IMR-90 (cell line): ENCODE measurements at regions of chr3 and their contacts with region 1.

Region 1: DNA sequence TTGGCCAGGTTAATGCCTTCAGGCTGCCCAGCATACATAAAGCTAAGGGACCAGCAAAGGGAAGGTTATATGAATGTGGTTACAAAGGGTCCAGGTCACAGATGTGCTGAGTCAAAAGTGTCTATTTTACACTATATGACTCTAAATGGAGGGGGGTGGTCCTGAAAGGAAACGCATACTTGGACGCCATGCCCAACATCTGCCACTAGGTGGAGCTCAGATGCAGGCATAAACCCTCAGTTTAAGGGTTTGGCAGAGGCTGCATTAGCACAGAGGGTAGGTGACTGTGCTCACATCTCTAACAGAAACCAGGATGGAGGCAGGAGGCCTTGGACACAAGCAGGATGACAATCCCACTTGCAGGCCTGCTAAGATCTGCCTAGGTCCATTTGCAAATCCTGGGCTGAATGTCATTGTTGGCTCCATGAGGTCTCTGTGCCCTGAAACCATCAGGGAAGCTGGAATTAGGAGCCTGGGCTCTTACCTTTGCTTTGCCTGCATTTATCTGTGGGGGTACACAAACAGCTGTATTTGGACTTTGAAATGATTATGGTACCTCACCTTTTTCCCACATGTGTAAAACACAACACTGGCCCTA is 55.8 kb downstream of the ZNF621 start:
- DNase-seq: peak; percentile 60
- ATAC-seq: peak; percentile 86
- H3K4me3 ChIP-seq: no peak overlapping the region
- H3K27ac ChIP-seq: no peak overlapping the region
- H3K4me1 ChIP-seq: no peaks in the 10 kb centered on the region
- H3K27me3 ChIP-seq: peaks cover 10% of the 10 kb centered on the region; the same call in 1 of the 2 replicates
- CTCF ChIP-seq: peak; percentile 84
- POLR2A ChIP-seq: no peak
- RAD21 ChIP-seq: peak; percentile 90

Region 2: GRCh38 chr3:40337136-40338108 is 243.2 kb before region 1 on chr3:
- CTCF ChIA-PET with region 1: no interaction called
- POLR2A ChIA-PET with region 1: interaction called, 3 read pairs
- dilution Hi-C with region 1: no loop called
- in situ Hi-C with region 1: loop called (anchors 25 kb)
- intact Hi-C with region 1: no loop called
- DNase-seq: no peak
- ATAC-seq: no peak
- H3K4me3 ChIP-seq: no peak overlapping the region
- H3K27ac ChIP-seq: no peak overlapping the region
- H3K4me1 ChIP-seq: no peaks in the 10 kb centered on the region
- H3K27me3 ChIP-seq: peaks cover 2% of the 10 kb centered on the region; the same call in 1 of the 2 replicates
- CTCF ChIP-seq: no peak
- POLR2A ChIP-seq: no peak
- RAD21 ChIP-seq: no peak

Region 3: GRCh38 chr3:41716471-41716870 is 1135.9 kb after region 1 on chr3:
- CTCF ChIA-PET with region 1: no interaction called
- POLR2A ChIA-PET with region 1: no interaction called
- dilution Hi-C with region 1: no loop called
- in situ Hi-C with region 1: no loop called
- intact Hi-C with region 1: loop called (anchors 1 kb)
- DNase-seq: peak; percentile 37
- ATAC-seq: no peak
- H3K4me3 ChIP-seq: no peak overlapping the region
- H3K27ac ChIP-seq: no peak overlapping the region
- H3K4me1 ChIP-seq: no peaks in the 10 kb centered on the region; the same call in 1 of the 2 replicates
- H3K27me3 ChIP-seq: no peaks in the 10 kb centered on the region
- CTCF ChIP-seq: peak; percentile 59
- POLR2A ChIP-seq: no peak
- RAD21 ChIP-seq: peak; percentile 54

Region 4: GRCh38 chr3:41881233-41881821 is 1300.7 kb after region 1 on chr3:
- CTCF ChIA-PET with region 1: interaction called, 5 read pairs
- POLR2A ChIA-PET with region 1: no interaction called
- dilution Hi-C with region 1: no loop called
- in situ Hi-C with region 1: loop called (anchors 5 kb)
- intact Hi-C with region 1: loop called (anchors 1 kb)
- DNase-seq: peak; percentile 48
- ATAC-seq: no peak
- H3K4me3 ChIP-seq: no peak overlapping the region
- H3K27ac ChIP-seq: no peak overlapping the region
- H3K4me1 ChIP-seq: no peaks in the 10 kb centered on the region
- H3K27me3 ChIP-seq: no peaks in the 10 kb centered on the region
- CTCF ChIP-seq: peak; percentile 77
- POLR2A ChIP-seq: no peak
- RAD21 ChIP-seq: peak; percentile 72

Region 5: DNA sequence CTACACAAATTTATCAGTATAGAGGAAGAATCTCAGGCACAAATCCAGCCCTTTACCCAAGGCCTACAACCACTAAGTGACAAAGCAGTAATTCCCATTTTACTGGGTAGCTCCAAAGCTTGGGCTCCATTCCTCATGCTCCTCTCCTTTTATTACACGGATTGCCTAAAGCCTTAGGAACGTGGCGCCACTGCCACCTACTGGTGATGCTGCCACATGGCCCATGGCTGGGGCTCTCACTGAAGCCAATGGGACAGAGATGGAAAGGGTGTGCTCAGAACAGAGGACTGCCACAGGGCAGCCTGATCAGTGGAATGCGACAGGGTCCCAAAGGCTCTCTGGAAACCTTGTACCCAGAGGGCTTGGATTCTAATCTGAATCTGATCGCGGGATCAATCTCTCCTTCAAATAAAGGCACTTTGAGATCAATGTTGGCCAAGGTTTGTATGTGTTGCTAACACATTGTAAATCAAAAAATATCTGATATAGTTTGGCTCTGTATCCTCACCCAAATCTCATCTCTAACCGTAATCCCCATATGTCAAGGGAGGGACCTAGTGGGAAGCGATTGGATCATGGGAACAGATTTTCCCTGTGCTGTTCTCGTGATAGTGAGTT is 1863.3 kb after region 1 on chr3:
- CTCF ChIA-PET with region 1: no interaction called
- POLR2A ChIA-PET with region 1: no interaction called
- dilution Hi-C with region 1: no loop called
- in situ Hi-C with region 1: no loop called
- intact Hi-C with region 1: loop called (anchors 10 kb)
- DNase-seq: peak; percentile 59
- ATAC-seq: peak; percentile 100
- H3K4me3 ChIP-seq: no peak overlapping the region
- H3K27ac ChIP-seq: no peak overlapping the region
- H3K4me1 ChIP-seq: no peaks in the 10 kb centered on the region
- H3K27me3 ChIP-seq: peaks cover 11% of the 10 kb centered on the region
- CTCF ChIP-seq: peak; percentile 95
- POLR2A ChIP-seq: no peak
- RAD21 ChIP-seq: peak; percentile 92